ENCODE measurements at regions of chr4 and their contacts with region 1.

Region 1: GRCh38 chr4:168076989-168077725 is 15.2 kb upstream of the ANXA10 start:
- DNase-seq: peak; percentile 49 to 68
- H3K4me3 ChIP-seq: no peak overlapping the region
- H3K4me3 Mint-ChIP-seq: no peak overlapping the region
- H3K27ac Mint-ChIP-seq: no peak overlapping the region
- H3K4me1 ChIP-seq: no peaks in the 10 kb centered on the region
- H3K4me1 Mint-ChIP-seq: no peaks in the 10 kb centered on the region
- H3K27me3 ChIP-seq: no peaks in the 10 kb centered on the region
- H3K27me3 Mint-ChIP-seq: no peaks in the 10 kb centered on the region
- CTCF ChIP-seq: peak; percentile 79 to 81

Region 2: DNA sequence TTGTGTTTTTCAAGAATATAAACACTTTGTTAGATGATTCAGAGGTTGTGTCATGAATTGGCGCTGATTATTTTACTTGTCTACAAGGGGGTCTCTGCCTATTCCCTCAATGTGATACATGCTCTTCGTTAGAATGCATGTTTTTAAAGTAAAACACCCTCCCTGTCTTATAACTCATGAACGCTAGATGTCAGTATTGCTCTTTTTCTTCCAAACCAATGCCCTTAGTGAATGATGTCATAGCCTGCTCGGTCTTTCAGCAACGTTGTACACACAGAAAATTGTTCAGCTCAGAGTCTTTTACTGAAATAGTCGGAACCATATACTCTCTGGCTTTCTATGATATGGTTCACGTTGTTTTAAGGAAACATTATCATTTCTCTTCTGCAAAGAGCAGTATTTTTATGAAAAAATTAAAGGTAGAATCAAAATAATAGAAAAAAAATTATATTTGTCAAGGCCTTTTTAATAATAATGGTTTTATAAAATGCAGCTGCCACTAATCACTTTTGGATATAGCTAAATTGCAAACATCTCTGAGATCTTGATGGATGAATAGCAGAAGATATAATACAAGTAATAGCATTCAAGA is 1911.2 kb before region 1 on chr4:
- CTCF ChIA-PET with region 1: no interaction called
- POLR2A ChIA-PET with region 1: no interaction called
- intact Hi-C with region 1: loop called (anchors 2 kb)
- DNase-seq: peak; percentile 32 to 62
- H3K4me3 ChIP-seq: no peak overlapping the region
- H3K4me3 Mint-ChIP-seq: no peak overlapping the region
- H3K27ac Mint-ChIP-seq: no peak overlapping the region
- H3K4me1 ChIP-seq: no peaks in the 10 kb centered on the region
- H3K4me1 Mint-ChIP-seq: no peaks in the 10 kb centered on the region
- H3K27me3 ChIP-seq: no peaks in the 10 kb centered on the region
- H3K27me3 Mint-ChIP-seq: peaks cover 3% of the 10 kb centered on the region
- CTCF ChIP-seq: peak; percentile 62 to 66

Region 3: GRCh38 chr4:167021545-167022155 is 1055.5 kb before region 1 on chr4:
- CTCF ChIA-PET with region 1: no interaction called
- POLR2A ChIA-PET with region 1: no interaction called
- intact Hi-C with region 1: loop called (anchors 1 kb)
- DNase-seq: peak; percentile 54 to 66
- H3K4me3 ChIP-seq: no peak overlapping the region
- H3K4me3 Mint-ChIP-seq: no peak overlapping the region
- H3K27ac Mint-ChIP-seq: no peak overlapping the region
- H3K4me1 ChIP-seq: peaks cover 26% of the 10 kb centered on the region
- H3K4me1 Mint-ChIP-seq: no peaks in the 10 kb centered on the region
- H3K27me3 ChIP-seq: no peaks in the 10 kb centered on the region
- H3K27me3 Mint-ChIP-seq: peaks cover 2% of the 10 kb centered on the region
- CTCF ChIP-seq: peak; percentile 73 to 79

Region 4: GRCh38 chr4:167622481-167623246 is 454.5 kb before region 1 on chr4:
- CTCF ChIA-PET with region 1: no interaction called
- POLR2A ChIA-PET with region 1: no interaction called
- intact Hi-C with region 1: loop called (anchors 1 kb)
- DNase-seq: peak; percentile 47 to 63
- H3K4me3 ChIP-seq: no peak overlapping the region
- H3K4me3 Mint-ChIP-seq: no peak overlapping the region
- H3K27ac Mint-ChIP-seq: no peak overlapping the region
- H3K4me1 ChIP-seq: no peaks in the 10 kb centered on the region
- H3K4me1 Mint-ChIP-seq: peaks cover 6% of the 10 kb centered on the region
- H3K27me3 ChIP-seq: no peaks in the 10 kb centered on the region
- H3K27me3 Mint-ChIP-seq: peaks cover 2% of the 10 kb centered on the region
- CTCF ChIP-seq: peak; percentile 63 to 82

Region 5: GRCh38 chr4:167897116-167897515 is 180.0 kb before region 1 on chr4:
- CTCF ChIA-PET with region 1: no interaction called
- POLR2A ChIA-PET with region 1: interaction called, 3 read pairs
- intact Hi-C with region 1: loop called (anchors 5 kb)
- DNase-seq: peak; percentile 54 to 89
- H3K4me3 ChIP-seq: no peak overlapping the region
- H3K4me3 Mint-ChIP-seq: no peak overlapping the region
- H3K27ac Mint-ChIP-seq: peak overlapping the region; percentile 53
- H3K4me1 ChIP-seq: peaks cover 11% of the 10 kb centered on the region
- H3K4me1 Mint-ChIP-seq: no peaks in the 10 kb centered on the region
- H3K27me3 ChIP-seq: no peaks in the 10 kb centered on the region
- H3K27me3 Mint-ChIP-seq: no peaks in the 10 kb centered on the region
- CTCF ChIP-seq: no peak

Region 6: DNA sequence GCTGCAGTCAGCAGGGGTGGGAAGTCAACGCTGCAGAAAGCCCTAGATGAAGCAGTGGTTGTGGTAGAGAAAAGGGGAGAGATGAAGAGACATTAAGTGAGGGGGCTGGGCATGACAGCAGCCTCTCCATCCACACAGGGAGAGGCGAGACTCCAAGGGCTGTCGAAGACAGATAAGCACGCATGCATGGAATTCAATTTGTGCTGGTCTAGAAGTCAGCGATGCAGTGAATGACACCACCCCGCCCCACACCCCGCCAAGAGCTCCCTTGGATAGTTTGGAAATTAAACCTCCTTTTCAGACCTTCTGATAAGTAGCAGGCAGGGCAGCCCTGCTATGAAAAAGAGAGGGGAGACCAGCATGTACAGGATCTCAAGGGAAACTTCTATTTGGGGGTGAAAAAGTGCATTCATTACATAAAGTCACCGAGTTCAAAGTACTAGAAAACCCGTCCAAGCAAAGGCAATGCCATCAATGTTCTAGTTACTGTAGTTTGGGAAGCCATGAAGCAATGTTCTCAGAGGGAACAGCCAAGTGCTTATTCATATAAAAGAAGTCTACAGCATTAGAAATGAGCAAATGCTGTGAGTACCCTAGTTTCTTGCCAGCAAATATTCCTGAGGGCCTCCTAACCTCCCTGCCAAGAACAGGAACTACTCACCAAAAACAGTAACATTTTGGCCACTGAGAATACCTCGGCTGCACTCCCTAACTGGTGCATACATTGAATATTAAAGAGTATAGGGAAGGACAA is 137.1 kb before region 1 on chr4:
- CTCF ChIA-PET with region 1: no interaction called
- POLR2A ChIA-PET with region 1: no interaction called
- intact Hi-C with region 1: no loop called
- DNase-seq: no peak
- H3K4me3 ChIP-seq: no peak overlapping the region
- H3K4me3 Mint-ChIP-seq: no peak overlapping the region
- H3K27ac Mint-ChIP-seq: no peak overlapping the region
- H3K4me1 ChIP-seq: no peaks in the 10 kb centered on the region
- H3K4me1 Mint-ChIP-seq: no peaks in the 10 kb centered on the region
- H3K27me3 ChIP-seq: no peaks in the 10 kb centered on the region
- H3K27me3 Mint-ChIP-seq: no peaks in the 10 kb centered on the region
- CTCF ChIP-seq: no peak

Region 7: DNA sequence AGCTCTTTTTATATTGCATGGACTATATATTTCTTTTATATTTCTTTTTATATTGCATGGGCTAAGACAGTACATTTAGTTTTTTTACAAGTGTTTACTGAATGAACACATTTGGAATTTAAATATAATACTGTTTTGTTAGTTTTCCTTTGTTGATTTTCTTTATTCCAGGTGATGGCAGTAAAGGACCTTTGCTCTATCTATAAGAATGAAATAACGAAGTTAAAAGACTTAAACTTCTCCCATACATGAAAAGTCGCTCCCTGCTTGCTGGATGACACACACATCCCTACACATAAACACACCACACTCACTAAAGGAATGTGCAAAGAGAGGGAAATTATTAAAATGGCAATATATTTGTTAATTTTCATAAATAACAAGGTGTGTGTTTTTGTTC is 87.3 kb before region 1 on chr4:
- CTCF ChIA-PET with region 1: no interaction called
- POLR2A ChIA-PET with region 1: no interaction called
- intact Hi-C with region 1: loop called (anchors 1 kb)
- DNase-seq: no peak
- H3K4me3 ChIP-seq: no peak overlapping the region
- H3K4me3 Mint-ChIP-seq: no peak overlapping the region
- H3K27ac Mint-ChIP-seq: no peak overlapping the region
- H3K4me1 ChIP-seq: no peaks in the 10 kb centered on the region
- H3K4me1 Mint-ChIP-seq: no peaks in the 10 kb centered on the region
- H3K27me3 ChIP-seq: no peaks in the 10 kb centered on the region
- H3K27me3 Mint-ChIP-seq: no peaks in the 10 kb centered on the region
- CTCF ChIP-seq: no peak

Region 8: GRCh38 chr4:168028568-168028967 is 48.6 kb before region 1 on chr4:
- CTCF ChIA-PET with region 1: no interaction called
- POLR2A ChIA-PET with region 1: no interaction called
- intact Hi-C with region 1: loop called (anchors 1 kb)
- DNase-seq: no peak
- H3K4me3 ChIP-seq: no peak overlapping the region
- H3K4me3 Mint-ChIP-seq: no peak overlapping the region
- H3K27ac Mint-ChIP-seq: no peak overlapping the region
- H3K4me1 ChIP-seq: no peaks in the 10 kb centered on the region
- H3K4me1 Mint-ChIP-seq: no peaks in the 10 kb centered on the region
- H3K27me3 ChIP-seq: no peaks in the 10 kb centered on the region
- H3K27me3 Mint-ChIP-seq: no peaks in the 10 kb centered on the region
- CTCF ChIP-seq: no peak

Region 9: DNA sequence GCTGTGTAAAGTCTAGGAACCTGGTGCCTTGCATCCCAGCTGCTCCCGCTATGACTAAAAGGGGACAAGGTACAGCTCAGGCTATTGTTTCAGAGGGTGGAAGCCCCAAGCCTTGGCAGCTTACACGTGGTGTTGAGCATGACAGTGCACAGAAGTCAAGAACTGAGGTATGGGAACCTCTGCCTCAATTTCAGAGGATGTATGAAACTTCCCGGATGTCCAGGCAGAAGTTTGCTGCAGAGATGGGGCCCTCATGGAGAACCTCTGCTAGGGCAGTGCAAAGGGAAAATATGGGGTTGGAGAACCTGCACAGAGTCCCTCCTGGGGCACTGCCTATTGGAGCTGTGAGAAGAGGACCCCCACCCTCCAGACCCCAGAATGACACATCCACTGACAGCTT is 164.8 kb after region 1 on chr4:
- CTCF ChIA-PET with region 1: no interaction called
- POLR2A ChIA-PET with region 1: no interaction called
- intact Hi-C with region 1: no loop called
- DNase-seq: no peak
- H3K4me3 ChIP-seq: no peak overlapping the region
- H3K4me3 Mint-ChIP-seq: no peak overlapping the region
- H3K27ac Mint-ChIP-seq: no peak overlapping the region
- H3K4me1 ChIP-seq: no peaks in the 10 kb centered on the region
- H3K4me1 Mint-ChIP-seq: no peaks in the 10 kb centered on the region
- H3K27me3 ChIP-seq: no peaks in the 10 kb centered on the region
- H3K27me3 Mint-ChIP-seq: no peaks in the 10 kb centered on the region
- CTCF ChIP-seq: no peak

Measured in Caco-2 (cell line).